ENCODE measurements at regions of chr3 and their contacts with region 1.

Region 1: GRCh38 chr3:12891985-12892839 is 50.8 kb upstream of the RPL32 start:
- DNase-seq: peak; percentile 55 to 62
- ATAC-seq: peak in 1 of 2 experiments; percentile 58; a peak in 3 of 6 replicates
- H3K4me3 ChIP-seq: no peak overlapping the region
- H3K27ac ChIP-seq: no peak overlapping the region
- H3K4me1 ChIP-seq: no peaks in the 10 kb centered on the region
- CTCF ChIP-seq: peak; percentile 86
- EP300 ChIP-seq: no peak
- POLR2A ChIP-seq: no peak
- RAD21 ChIP-seq: peak; percentile 92 to 96

Region 2: DNA sequence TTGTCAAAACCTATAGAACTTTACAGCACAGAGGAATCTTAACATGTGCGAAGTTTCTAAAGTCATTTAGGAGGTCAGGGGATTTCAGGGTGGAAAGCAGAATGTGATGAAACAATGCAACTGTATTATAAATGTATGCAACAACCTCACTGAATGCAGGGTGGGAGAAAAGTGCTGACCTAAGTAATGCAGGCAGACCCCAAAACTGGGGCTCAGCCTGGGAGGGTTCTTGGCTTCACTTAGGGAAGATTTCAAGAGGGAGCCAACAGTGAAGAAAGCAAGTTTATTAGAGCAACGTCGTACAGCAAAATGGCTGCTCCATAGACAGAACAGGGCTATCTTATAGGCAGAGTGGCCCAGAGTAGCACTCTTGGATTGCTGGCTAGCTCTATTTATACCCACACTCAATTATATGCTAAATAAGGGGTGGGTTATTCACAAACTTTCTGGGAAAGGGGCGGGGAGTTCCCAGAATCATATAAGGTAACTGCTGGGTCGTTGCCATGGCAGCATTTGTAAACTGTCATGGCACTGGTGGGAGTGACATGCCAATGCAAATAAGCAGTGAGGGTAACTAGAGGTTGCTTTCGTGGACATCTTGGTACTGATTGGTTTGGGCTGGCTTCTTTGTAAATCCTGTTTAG is 109.9 kb before region 1 on chr3:
- CTCF ChIA-PET with region 1: interaction called, 14 read pairs
- POLR2A ChIA-PET with region 1: no interaction called
- DNase-seq: peak in 1 of 2 experiments; percentile 65
- ATAC-seq: peak; percentile 30 to 55; a peak in 2 of 6 replicates
- H3K4me3 ChIP-seq: no peak overlapping the region
- H3K27ac ChIP-seq: no peak overlapping the region
- H3K4me1 ChIP-seq: no peaks in the 10 kb centered on the region
- CTCF ChIP-seq: no peak
- EP300 ChIP-seq: no peak
- POLR2A ChIP-seq: no peak
- RAD21 ChIP-seq: no peak

Region 3: DNA sequence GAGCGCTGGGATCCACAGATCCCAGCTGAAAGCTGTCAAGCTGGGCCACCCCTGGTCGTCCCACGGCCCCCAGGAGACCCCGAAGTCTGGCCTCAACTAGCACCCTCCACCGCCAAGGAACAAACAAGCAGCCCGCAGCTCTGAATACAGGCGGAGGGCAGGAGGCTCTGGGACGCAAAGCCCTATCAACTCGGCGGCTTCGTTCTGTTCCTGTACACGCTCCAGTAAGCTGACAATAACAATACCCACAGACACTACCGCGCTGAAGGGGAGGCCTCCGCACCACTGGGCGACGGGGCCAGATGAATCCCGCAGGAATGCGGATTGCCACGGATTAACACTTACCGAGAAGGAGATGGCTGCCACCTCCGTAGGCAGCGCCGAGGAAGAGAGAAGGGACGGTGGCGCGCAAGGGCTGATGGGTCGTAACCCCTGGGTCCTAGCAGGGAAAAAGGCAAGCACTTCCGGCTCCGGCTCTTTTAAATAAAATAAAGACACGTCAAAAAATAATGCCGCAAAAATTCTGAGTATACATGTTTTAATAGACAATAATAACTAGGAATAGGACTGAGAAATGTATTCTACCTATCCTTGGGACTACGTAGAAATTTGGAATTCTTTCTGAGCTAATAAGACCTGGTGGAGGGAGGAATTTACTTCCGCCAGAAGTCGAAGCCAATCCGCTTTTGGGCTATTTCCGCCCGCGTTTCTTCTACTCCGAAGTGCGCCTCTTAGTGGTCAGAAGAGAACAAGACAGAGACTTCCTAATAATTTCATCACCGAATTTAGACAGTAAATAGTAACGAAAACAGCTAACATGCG is 50.9 kb before region 1 on chr3 and contains the start of gene RPL32:
- CTCF ChIA-PET with region 1: interaction called, 18 read pairs
- POLR2A ChIA-PET with region 1: no interaction called
- DNase-seq: peak; percentile 84 to 96
- ATAC-seq: peak; percentile 88 to 94
- H3K4me3 ChIP-seq: peak within 1 kb of the TSS; percentile 98
- H3K27ac ChIP-seq: peak within 1 kb of the TSS; percentile 95 to 97
- H3K4me1 ChIP-seq: peaks cover 33% of the 10 kb centered on the region
- CTCF ChIP-seq: peak; percentile 84
- EP300 ChIP-seq: no peak
- POLR2A ChIP-seq: peak; percentile 97
- RAD21 ChIP-seq: no peak; a peak in 1 of 5 replicates
- polyA plus RNA-seq, gene RPL32: 2,852 and 3,429 TPM in 2 replicates

Region 4: GRCh38 chr3:12861611-12862010 is 30.6 kb before region 1 on chr3:
- CTCF ChIA-PET with region 1: interaction called, 28 read pairs
- POLR2A ChIA-PET with region 1: no interaction called
- DNase-seq: no peak
- ATAC-seq: no peak
- H3K4me3 ChIP-seq: no peak overlapping the region
- H3K27ac ChIP-seq: no peak overlapping the region
- H3K4me1 ChIP-seq: no peaks in the 10 kb centered on the region
- CTCF ChIP-seq: no peak
- EP300 ChIP-seq: no peak
- POLR2A ChIP-seq: no peak
- RAD21 ChIP-seq: no peak

Region 5: GRCh38 chr3:12875857-12876836 is 16.1 kb before region 1 on chr3:
- CTCF ChIA-PET with region 1: interaction called, 90 read pairs
- POLR2A ChIA-PET with region 1: no interaction called
- DNase-seq: no peak
- ATAC-seq: peak; percentile 44 to 82
- H3K4me3 ChIP-seq: peak overlapping the region; percentile 35; the same call in 2 of the 3 replicates
- H3K27ac ChIP-seq: peak overlapping the region in 1 of 2 experiments; percentile 63; a peak in 3 of 6 replicates
- H3K4me1 ChIP-seq: 0 out of 3 replicates have a peak, but pooled peaks cover 3% of the 10 kb centered on the region
- CTCF ChIP-seq: peak; percentile 23; the same call in 1 of the 3 replicates
- EP300 ChIP-seq: no peak
- POLR2A ChIP-seq: no peak
- RAD21 ChIP-seq: no peak

Region 6: GRCh38 chr3:12984023-12984823 is 92.0 kb after region 1 on chr3:
- CTCF ChIA-PET with region 1: interaction called, 13 read pairs
- POLR2A ChIA-PET with region 1: no interaction called
- DNase-seq: peak; percentile 70 to 83
- ATAC-seq: peak; percentile 91 to 98
- H3K4me3 ChIP-seq: no peak overlapping the region
- H3K27ac ChIP-seq: no peak overlapping the region
- H3K4me1 ChIP-seq: no peaks in the 10 kb centered on the region
- CTCF ChIP-seq: peak; percentile 68
- EP300 ChIP-seq: no peak
- POLR2A ChIP-seq: no peak
- RAD21 ChIP-seq: peak; percentile 57 to 72